B cell (primary cell): ENCODE measurements at regions of chr6 and their contacts with region 1.

Region 1: GRCh38 chr6:45714741-45715507 is 300.7 kb downstream of the CLIC5 start:
- DNase-seq: peak; percentile 75
- ATAC-seq: peak; percentile 65
- H3K4me3 ChIP-seq: no peak overlapping the region
- H3K4me3 Mint-ChIP-seq: no peak overlapping the region
- H3K27ac ChIP-seq: no peak overlapping the region
- H3K27ac Mint-ChIP-seq: no peak overlapping the region
- H3K4me1 ChIP-seq: peaks cover 6 to 20% of the 10 kb centered on the region in 2 donors
- H3K4me1 Mint-ChIP-seq: peaks cover 22% of the 10 kb centered on the region
- H3K27me3 ChIP-seq: no peaks in the 10 kb centered on the region
- H3K27me3 Mint-ChIP-seq: no peaks in the 10 kb centered on the region
- CTCF ChIP-seq: peak; percentile 73

Region 2: DNA sequence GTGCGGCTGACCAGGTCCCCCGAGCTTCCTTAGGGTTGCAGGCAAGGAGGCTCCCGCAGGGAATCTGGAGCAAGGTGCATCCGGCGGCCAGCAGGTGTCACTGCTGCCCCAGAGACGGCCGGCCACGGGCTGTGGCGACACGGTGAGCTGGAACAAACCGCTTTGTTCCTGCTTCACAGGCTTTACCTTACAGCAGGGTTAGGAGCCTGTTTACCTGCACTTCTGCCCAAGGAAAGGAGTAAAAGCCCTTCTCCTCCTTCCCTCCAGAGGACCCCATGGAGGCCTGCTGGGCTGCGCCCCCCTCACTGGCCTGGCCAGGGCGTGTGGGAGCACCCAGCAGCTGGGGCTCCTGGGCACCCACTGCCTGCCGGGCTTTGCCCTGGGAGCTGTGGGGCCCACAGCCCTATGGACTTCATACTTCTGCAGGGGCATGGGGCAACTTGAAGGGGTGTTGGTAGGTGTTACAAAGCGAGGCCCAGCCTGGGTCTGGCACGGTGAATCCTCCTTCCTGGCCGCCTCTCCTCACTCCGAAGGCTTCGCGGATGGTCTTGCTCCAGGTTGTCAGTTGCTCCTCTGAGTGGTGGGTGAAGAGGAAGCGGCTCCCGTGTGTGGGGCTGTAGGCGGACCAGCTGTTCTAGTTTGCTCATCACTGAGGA is 1239.0 kb before region 1 on chr6:
- CTCF ChIA-PET with region 1: interaction called, 15 read pairs
- POLR2A ChIA-PET with region 1: no interaction called
- intact Hi-C with region 1: loop called (anchors 5 kb)
- DNase-seq: peak; percentile 63
- ATAC-seq: peak; percentile 39
- H3K4me3 ChIP-seq: no peak overlapping the region
- H3K4me3 Mint-ChIP-seq: no peak overlapping the region
- H3K27ac ChIP-seq: no peak overlapping the region
- H3K27ac Mint-ChIP-seq: no peak overlapping the region
- H3K4me1 ChIP-seq: peaks cover 0 to 6% of the 10 kb centered on the region in 2 donors
- H3K4me1 Mint-ChIP-seq: no peaks in the 10 kb centered on the region
- H3K27me3 ChIP-seq: peaks cover 0 to 9% (median 1%) of the 10 kb centered on the region in 4 experiments
- H3K27me3 Mint-ChIP-seq: peaks cover 15% of the 10 kb centered on the region
- CTCF ChIP-seq: peak; percentile 72

Region 3: GRCh38 chr6:44662461-44663121 is 1052.3 kb before region 1 on chr6:
- CTCF ChIA-PET with region 1: interaction called, 89 read pairs
- POLR2A ChIA-PET with region 1: no interaction called
- intact Hi-C with region 1: no loop called
- DNase-seq: no peak
- ATAC-seq: no peak
- H3K4me3 ChIP-seq: no peak overlapping the region
- H3K4me3 Mint-ChIP-seq: no peak overlapping the region
- H3K27ac ChIP-seq: no peak overlapping the region
- H3K27ac Mint-ChIP-seq: no peak overlapping the region
- H3K4me1 ChIP-seq: no peaks in the 10 kb centered on the region
- H3K4me1 Mint-ChIP-seq: no peaks in the 10 kb centered on the region
- H3K27me3 ChIP-seq: peaks cover 0 to under 1% (median 0%) of the 10 kb centered on the region in 4 experiments
- H3K27me3 Mint-ChIP-seq: peaks cover 18% of the 10 kb centered on the region
- CTCF ChIP-seq: no peak

Region 4: GRCh38 chr6:45514454-45515230 is 200.3 kb before region 1 on chr6:
- CTCF ChIA-PET with region 1: no interaction called
- POLR2A ChIA-PET with region 1: no interaction called
- intact Hi-C with region 1: no loop called
- DNase-seq: no peak
- ATAC-seq: no peak
- H3K4me3 ChIP-seq: no peak overlapping the region
- H3K4me3 Mint-ChIP-seq: no peak overlapping the region
- H3K27ac ChIP-seq: no peak overlapping the region
- H3K27ac Mint-ChIP-seq: no peak overlapping the region
- H3K4me1 ChIP-seq: peaks cover 0 to 8% of the 10 kb centered on the region in 2 donors
- H3K4me1 Mint-ChIP-seq: peaks cover 12% of the 10 kb centered on the region
- H3K27me3 ChIP-seq: no peaks in the 10 kb centered on the region
- H3K27me3 Mint-ChIP-seq: no peaks in the 10 kb centered on the region
- CTCF ChIP-seq: no peak

Region 5: DNA sequence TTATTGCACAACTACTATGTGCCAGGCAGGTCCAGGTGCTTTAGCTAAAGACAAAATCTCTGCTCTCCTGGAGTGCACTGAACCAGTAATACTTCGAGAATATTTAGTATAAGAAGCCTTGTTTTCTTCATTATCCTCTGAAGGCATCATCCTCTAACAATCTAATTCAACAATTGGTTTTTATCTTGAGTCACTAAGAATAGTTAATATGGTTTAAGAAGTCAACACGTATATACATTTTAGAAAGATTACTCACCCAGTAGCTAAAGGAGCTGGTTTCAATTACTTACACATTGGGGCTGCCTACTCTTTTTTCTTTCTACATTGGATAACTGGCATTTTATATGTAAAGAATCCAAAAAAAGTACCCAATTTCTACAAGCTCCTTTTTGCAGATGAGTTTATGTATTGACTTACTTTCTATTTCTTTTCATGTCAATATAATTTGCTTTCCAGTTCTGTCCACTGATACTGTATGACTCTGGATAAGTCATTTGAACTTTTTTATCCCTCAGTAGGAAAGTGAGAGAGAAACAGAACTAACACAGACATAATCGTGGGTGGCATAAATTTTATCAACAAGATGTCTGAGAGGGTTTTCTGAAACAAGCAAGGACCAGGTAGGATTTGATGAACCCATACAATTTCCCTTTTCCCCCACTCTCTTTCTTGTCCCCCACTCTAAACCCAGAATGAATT is 11.7 kb before region 1 on chr6:
- CTCF ChIA-PET with region 1: interaction called, 13 read pairs
- POLR2A ChIA-PET with region 1: no interaction called
- intact Hi-C with region 1: no loop called
- DNase-seq: no peak
- ATAC-seq: no peak
- H3K4me3 ChIP-seq: no peak overlapping the region
- H3K4me3 Mint-ChIP-seq: no peak overlapping the region
- H3K27ac ChIP-seq: no peak overlapping the region
- H3K27ac Mint-ChIP-seq: no peak overlapping the region
- H3K4me1 ChIP-seq: peaks cover 0 to 8% of the 10 kb centered on the region in 2 donors
- H3K4me1 Mint-ChIP-seq: peaks cover 4% of the 10 kb centered on the region
- H3K27me3 ChIP-seq: no peaks in the 10 kb centered on the region
- H3K27me3 Mint-ChIP-seq: no peaks in the 10 kb centered on the region
- CTCF ChIP-seq: no peak